ENCODE measurements at regions of chr21 and their contacts with region 1.

Region 1: GRCh38 chr21:21463456-21463855 is 465.2 kb downstream of the NCAM2 start:
- DNase-seq: no peak
- H3K4me3 ChIP-seq: no peak overlapping the region
- H3K4me3 Mint-ChIP-seq: no peak overlapping the region
- H3K27ac ChIP-seq: no peak overlapping the region
- H3K27ac Mint-ChIP-seq: no peak overlapping the region
- H3K4me1 ChIP-seq: no peaks in the 10 kb centered on the region
- H3K4me1 Mint-ChIP-seq: no peaks in the 10 kb centered on the region
- H3K27me3 ChIP-seq: no peaks in the 10 kb centered on the region
- H3K27me3 Mint-ChIP-seq: no peaks in the 10 kb centered on the region

Region 2: GRCh38 chr21:21406921-21407320 is 56.5 kb before region 1 on chr21:
- CTCF ChIA-PET with region 1: no interaction called
- POLR2A ChIA-PET with region 1: no interaction called
- intact Hi-C with region 1: loop called (anchors 10 kb)
- DNase-seq: no peak
- H3K4me3 ChIP-seq: no peak overlapping the region
- H3K4me3 Mint-ChIP-seq: no peak overlapping the region
- H3K27ac ChIP-seq: no peak overlapping the region
- H3K27ac Mint-ChIP-seq: no peak overlapping the region
- H3K4me1 ChIP-seq: no peaks in the 10 kb centered on the region
- H3K4me1 Mint-ChIP-seq: no peaks in the 10 kb centered on the region
- H3K27me3 ChIP-seq: no peaks in the 10 kb centered on the region
- H3K27me3 Mint-ChIP-seq: no peaks in the 10 kb centered on the region